GM10248 (cell line): ENCODE measurements at regions of chr4 and their contacts with region 1.

Region 1: GRCh38 chr4:102449751-102450352 is 51.3 kb upstream of the NFKB1 start:
- DNase-seq: peak; percentile 58
- CTCF ChIP-seq: peak; percentile 73

Region 2: GRCh38 chr4:102439236-102439614 is 10.6 kb before region 1 on chr4:
- CTCF ChIA-PET with region 1: interaction called, 14 read pairs
- POLR2A ChIA-PET with region 1: no interaction called
- DNase-seq: no peak
- CTCF ChIP-seq: no peak